Naive thymus-derived CD4-positive, alpha-beta T cell (primary cell): ENCODE measurements at regions of chr2 and their contacts with region 1.

Region 1: DNA sequence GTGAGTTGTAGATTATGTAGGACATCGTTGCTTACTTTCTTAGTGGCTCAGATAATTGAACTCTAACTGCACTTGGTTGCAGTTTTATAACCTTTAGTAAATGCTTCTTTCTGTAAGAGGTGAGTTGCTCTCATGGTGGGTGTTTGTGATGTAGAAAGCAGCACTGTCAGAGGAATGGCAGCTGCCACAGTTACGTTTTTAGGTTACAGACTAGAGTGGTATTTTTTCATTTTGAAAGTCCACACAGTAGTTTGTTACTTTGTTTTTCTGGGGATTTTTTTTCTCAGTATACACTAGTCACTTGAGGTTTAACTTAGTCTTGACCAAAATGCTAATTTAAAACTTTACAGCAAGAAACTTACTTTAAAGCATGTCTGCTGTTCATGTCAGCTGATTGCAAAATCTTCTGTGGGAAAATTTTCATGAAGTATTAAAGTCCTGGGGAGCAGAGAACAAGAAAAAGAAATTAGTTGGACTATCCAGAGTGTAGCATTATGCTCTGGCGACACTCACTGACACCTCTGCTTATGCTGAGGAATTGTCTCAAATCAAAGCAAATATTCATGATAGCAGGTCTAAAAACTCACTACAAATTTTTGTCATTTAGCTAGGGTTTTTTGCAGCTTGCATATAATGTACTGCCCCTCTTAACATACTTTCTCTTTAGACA is 14.8 kb downstream of the AFTPH start:
- DNase-seq: no peak
- ATAC-seq: no peak
- H3K4me3 ChIP-seq: no peak overlapping the region
- H3K4me3 Mint-ChIP-seq: no peak overlapping the region
- H3K27ac ChIP-seq: no peak overlapping the region
- H3K27ac Mint-ChIP-seq: no peak overlapping the region
- H3K4me1 ChIP-seq: peaks cover 4 to 12% of the 10 kb centered on the region in 2 donors
- H3K4me1 Mint-ChIP-seq: peaks cover 36 to 88% (median 68%) of the 10 kb centered on the region in 7 donors
- H3K27me3 ChIP-seq: no peaks in the 10 kb centered on the region
- H3K27me3 Mint-ChIP-seq: no peaks in the 10 kb centered on the region

Region 2: DNA sequence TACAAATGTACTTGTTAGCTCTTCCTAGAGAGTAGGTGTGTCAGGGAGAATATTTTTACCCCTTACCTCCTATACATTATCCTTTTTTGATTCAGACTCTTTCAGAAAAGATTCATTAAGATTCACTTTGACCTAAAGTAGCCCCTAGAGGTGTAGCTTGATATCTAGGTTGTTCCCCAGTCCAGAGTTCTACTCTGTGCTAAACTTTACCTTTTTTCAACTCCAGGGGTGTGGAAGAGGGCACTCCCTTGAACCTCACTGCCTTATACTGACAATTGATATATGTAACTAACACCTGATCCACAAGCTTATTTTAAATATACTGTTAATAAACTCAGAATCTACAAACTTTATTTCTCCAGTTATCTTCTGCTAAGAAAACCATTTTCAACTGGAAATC is 15.2 kb after region 1 on chr2:
- CTCF ChIA-PET with region 1: no interaction called
- POLR2A ChIA-PET with region 1: no interaction called
- intact Hi-C with region 1: loop called in 1 of 2 experiments (anchors 2 kb)
- DNase-seq: no peak
- ATAC-seq: no peak
- H3K4me3 ChIP-seq: no peak overlapping the region
- H3K4me3 Mint-ChIP-seq: no peak overlapping the region
- H3K27ac ChIP-seq: no peak overlapping the region
- H3K27ac Mint-ChIP-seq: no peak overlapping the region
- H3K4me1 ChIP-seq: no peaks in the 10 kb centered on the region
- H3K4me1 Mint-ChIP-seq: peaks cover 3 to 30% (median 11%) of the 10 kb centered on the region in 7 donors
- H3K27me3 ChIP-seq: no peaks in the 10 kb centered on the region
- H3K27me3 Mint-ChIP-seq: no peaks in the 10 kb centered on the region